Posterior vena cava (tissue), 2 donors: ENCODE measurements at regions of chr14 and their contacts with region 1.

Region 1: GRCh38 chr14:71138448-71139293 is 231.4 kb downstream of the PCNX1 start:
- DNase-seq: peak; percentile 85

Region 2: DNA sequence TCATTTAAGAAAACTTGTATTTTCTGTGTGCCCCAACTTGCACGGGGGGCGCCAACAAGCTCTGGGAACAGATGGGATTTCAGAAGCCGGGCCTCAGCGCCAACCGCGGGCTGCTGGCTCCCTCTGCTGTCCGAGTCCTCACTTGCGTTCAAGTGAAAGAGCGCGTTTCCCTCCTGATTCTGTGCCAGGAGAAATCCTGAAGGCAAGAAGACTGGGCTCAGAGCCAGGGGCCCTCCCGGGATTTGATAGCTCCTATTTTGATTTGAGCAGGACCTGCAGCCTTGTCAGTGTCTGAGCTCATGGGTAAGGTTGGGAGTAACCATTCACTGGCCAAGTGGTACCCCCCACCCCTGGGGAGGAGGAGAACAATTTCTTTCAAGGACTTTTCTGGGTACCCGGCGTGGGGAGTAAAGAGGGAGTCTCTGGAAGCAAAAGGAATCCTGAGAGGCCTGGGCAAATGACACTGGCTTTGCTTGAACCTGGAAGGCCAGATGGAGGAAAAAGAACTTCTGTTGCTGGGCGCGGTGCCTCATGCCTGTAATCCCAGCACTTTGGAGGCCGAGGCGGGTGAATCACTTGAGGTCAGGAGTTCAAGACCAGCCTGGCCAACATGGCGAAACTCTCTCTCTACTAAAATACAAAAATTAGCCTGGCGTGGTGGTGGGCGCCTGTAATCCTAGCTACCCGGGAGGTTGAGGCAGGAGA is 614.6 kb after region 1 on chr14:
- intact Hi-C with region 1: loop called (anchors 2 to 10 kb)
- DNase-seq: peak; percentile 96

Region 3: GRCh38 chr14:71855399-71856036 is 716.8 kb after region 1 on chr14:
- intact Hi-C with region 1: loop called in 1 of 2 experiments (anchors 10 kb)
- DNase-seq: peak; percentile 91